Activated naive CD4-positive, alpha-beta T cell treated with anti-CD3 and anti-CD28 coated beads for 36 hours (primary cell): ENCODE measurements at regions of chr10 and their contacts with region 1.

Region 1: DNA sequence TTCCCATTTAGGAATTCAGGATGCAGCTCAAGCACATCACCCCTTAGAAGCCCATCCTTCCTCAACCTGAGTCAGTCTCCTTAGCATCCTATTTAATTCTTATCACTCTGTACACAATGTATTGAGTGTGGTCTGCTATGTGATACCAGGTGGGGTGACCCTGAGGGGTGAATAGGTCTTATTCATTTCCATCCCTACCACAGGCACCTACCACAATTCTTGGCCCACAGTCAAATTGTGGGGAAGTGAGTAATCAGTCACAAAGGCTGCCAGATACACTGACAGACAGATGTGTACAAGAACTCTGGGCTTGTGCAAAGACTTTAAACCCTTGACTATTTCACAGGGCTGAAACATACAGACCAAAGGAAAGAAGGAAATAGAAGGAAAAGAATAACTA is 560.5 kb downstream of the PARD3 start:
- DNase-seq: peak; percentile 54
- H3K4me3 Mint-ChIP-seq: no peak overlapping the region
- H3K27ac Mint-ChIP-seq: no peak overlapping the region
- H3K4me1 Mint-ChIP-seq: peaks cover 11% of the 10 kb centered on the region
- H3K27me3 Mint-ChIP-seq: peaks cover 4% of the 10 kb centered on the region

Region 2: DNA sequence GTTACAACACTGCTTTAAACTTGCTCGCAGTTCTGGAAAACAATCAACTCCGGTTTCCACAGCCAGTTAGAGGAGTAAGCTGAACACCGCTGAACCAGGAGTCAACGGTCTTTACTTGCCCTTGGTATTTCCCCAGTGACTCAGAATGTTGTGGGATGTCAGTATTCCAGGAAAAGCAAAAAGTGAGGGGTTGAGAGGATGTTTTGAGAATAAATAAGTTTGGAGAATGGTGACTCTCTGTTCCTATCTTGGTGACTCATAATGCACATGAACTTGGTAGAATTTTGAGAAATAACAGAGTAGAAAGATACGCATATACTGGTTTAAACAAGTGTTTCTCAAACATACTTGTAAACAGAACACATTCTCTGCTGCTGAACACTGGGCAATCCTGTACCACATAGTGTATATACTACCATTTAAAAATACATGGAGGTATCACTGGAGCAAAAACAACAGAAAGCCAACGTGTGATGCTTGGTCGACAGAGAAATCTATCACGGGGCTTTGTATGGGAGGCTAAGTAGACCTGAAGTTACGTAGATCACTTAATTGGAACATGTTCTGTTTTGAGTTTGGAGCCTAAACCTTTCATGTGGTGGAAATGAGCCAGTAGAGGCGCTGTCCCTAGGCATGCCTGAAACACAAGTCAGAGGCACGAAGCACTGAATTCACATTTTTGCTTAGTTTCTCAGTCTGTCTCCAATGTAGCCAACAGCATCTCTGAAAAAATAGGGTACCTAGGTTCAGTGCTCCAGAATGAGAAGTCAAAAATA is 26.2 kb after region 1 on chr10:
- CTCF ChIA-PET with region 1: no interaction called
- intact Hi-C with region 1: loop called (anchors 2 kb)
- DNase-seq: peak; percentile 23
- H3K4me3 Mint-ChIP-seq: no peak overlapping the region
- H3K27ac Mint-ChIP-seq: peak overlapping the region; percentile 68
- H3K4me1 Mint-ChIP-seq: peaks cover 30% of the 10 kb centered on the region
- H3K27me3 Mint-ChIP-seq: peaks cover 6% of the 10 kb centered on the region

Region 3: DNA sequence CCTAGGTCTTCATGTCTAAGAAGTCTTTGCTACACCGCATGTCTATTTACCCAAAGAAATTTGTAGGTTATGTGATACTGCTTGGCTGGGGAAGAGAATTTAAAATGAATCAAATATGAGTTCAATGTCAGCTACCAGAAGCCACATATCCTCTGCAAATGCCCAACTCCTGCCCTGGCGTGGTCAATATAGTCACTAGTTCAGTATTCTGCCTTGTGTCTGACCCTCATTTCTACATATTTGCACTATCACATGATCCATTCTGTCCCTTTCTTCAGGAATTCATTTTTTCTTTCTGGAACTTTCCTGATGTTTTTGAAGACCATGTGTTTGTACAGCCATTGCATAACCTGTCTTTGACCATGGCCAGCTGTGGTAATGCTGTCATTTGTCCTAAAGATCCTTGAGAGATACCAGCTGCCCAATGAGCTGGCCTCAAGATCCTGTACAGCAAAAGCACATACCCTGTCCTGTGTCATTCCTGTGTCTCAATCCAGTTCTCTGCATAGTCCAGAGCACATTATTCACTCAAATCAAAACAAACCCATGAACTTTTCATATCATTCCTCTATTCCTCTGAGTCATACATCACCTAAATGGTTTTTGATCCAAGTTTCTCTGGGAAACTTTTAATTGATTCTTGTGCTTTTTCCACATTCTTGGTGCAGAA is 36.0 kb after region 1 on chr10:
- CTCF ChIA-PET with region 1: no interaction called
- intact Hi-C with region 1: loop called (anchors 1 kb)
- DNase-seq: no peak
- H3K4me3 Mint-ChIP-seq: no peak overlapping the region
- H3K27ac Mint-ChIP-seq: no peak overlapping the region
- H3K4me1 Mint-ChIP-seq: peaks cover 31% of the 10 kb centered on the region
- H3K27me3 Mint-ChIP-seq: peaks cover 28% of the 10 kb centered on the region